CD4-positive, alpha-beta memory T cell (primary cell): ENCODE measurements at regions of chr3 and their contacts with region 1.

Region 1: GRCh38 chr3:98593046-98593936 is at the start of gene CPOX:
- DNase-seq: peak; percentile 74 to 87 (median 79)
- H3K4me3 ChIP-seq: peak within 1 kb of the TSS; percentile 43 to 92
- H3K4me3 Mint-ChIP-seq: peak within 1 kb of the TSS; percentile 93 to 100 (median 98)
- H3K27ac ChIP-seq: peak within 1 kb of the TSS; percentile 71
- H3K27ac Mint-ChIP-seq: peak within 1 kb of the TSS; percentile 74 to 99 (median 98)
- H3K4me1 ChIP-seq: peaks cover 32% of the 10 kb centered on the region
- H3K4me1 Mint-ChIP-seq: peaks cover 28 to 46% (median 37%) of the 10 kb centered on the region in 4 donors
- H3K27me3 ChIP-seq: no peaks in the 10 kb centered on the region
- H3K27me3 Mint-ChIP-seq: no peaks in the 10 kb centered on the region
- total RNA-seq, gene CPOX: 41.1 to 41.3 TPM

Region 2: GRCh38 chr3:97971677-97972567 is 621.4 kb before region 1 on chr3 and contains the start of gene RIOX2:
- CTCF ChIA-PET with region 1: no interaction called
- POLR2A ChIA-PET with region 1: no interaction called
- intact Hi-C with region 1: loop called (anchors 5 kb)
- DNase-seq: peak; percentile 74 to 84 (median 80)
- H3K4me3 ChIP-seq: peak within 1 kb of the TSS in 1 of 2 donors; percentile 54
- H3K4me3 Mint-ChIP-seq: peak within 1 kb of the TSS; percentile 88 to 96 (median 94)
- H3K27ac ChIP-seq: peak within 1 kb of the TSS; percentile 41
- H3K27ac Mint-ChIP-seq: peak within 1 kb of the TSS; percentile 91 to 96 (median 95)
- H3K4me1 ChIP-seq: peaks cover 46% of the 10 kb centered on the region
- H3K4me1 Mint-ChIP-seq: peaks cover 39 to 70% (median 55%) of the 10 kb centered on the region in 4 donors
- H3K27me3 ChIP-seq: no peaks in the 10 kb centered on the region
- H3K27me3 Mint-ChIP-seq: no peaks in the 10 kb centered on the region
- total RNA-seq, gene RIOX2: 32.2 to 35.5 TPM

Region 3: DNA sequence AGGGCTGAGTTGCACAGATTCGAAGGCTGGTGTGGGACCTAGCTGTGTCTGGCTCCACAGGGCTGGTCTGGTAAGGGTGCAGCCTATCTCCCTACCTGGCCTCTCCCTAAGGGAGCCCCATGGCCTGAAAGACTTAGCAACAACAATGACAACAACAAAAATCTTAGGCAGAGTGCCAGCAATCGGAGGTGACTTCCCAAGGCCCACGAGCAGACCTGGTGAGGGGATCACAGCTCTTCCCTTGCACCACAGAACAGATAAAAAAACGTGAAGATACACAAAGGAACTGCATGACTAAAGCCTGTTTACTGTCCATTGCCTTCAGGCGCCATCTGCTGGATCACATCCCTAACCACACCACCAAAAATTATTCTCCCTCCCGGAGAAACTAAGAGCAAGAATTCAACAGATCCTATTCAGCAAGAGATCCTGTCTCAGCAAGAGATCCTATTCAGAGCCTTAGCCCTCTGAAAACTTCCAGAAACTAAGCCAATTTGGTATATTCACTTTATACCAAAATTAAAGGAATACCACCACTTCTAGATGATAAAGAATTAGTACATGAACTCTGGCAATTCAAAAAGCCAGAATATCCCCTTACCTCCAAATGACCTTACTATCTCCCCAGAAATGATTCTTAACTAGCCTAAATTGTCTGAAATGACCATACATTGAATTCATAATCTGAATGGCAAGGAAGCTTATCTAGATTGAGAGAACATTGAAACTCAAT is 263.7 kb before region 1 on chr3:
- CTCF ChIA-PET with region 1: interaction called, 13 read pairs
- POLR2A ChIA-PET with region 1: no interaction called
- intact Hi-C with region 1: loop called (anchors 2 kb)
- DNase-seq: peak; percentile 38 to 56 (median 51)
- H3K4me3 ChIP-seq: no peak overlapping the region
- H3K4me3 Mint-ChIP-seq: peak overlapping the region in 1 of 8 donors; percentile 0
- H3K27ac ChIP-seq: no peak overlapping the region
- H3K27ac Mint-ChIP-seq: peak overlapping the region in 1 of 7 donors; percentile 6
- H3K4me1 ChIP-seq: no peaks in the 10 kb centered on the region
- H3K4me1 Mint-ChIP-seq: peaks cover 0 to 4% (median 2%) of the 10 kb centered on the region in 4 donors
- H3K27me3 ChIP-seq: no peaks in the 10 kb centered on the region
- H3K27me3 Mint-ChIP-seq: peaks cover 12 to 13% of the 10 kb centered on the region in 2 donors

Region 4: DNA sequence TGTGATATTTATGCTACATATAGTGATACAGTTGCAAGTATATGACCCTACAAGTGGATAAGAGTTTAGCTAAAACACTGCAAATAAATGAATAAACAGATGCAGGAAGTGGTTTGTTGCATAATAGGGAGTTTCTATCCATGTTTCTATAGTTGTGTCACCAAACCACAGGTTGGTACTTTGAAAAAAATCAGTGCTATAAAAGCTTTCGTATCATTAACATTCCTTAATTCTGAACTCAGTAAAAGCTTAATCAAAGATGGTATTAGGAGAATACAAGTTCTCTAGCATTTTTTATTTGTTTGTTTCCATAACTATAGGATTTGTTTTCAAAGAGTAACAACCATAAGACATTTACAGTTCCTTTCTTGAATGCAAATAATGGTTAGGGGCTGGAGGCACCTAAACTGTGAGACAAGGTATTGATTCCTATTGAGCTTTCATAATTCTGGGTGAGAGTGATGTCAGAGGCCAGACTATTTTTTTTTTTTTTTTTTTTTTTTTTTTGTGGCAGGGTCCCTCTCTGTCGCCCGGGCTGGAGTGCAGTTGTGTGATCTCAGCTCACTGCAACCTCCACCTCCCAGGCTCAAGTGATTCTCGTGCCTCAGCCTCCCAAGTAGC is 29.5 kb before region 1 on chr3:
- CTCF ChIA-PET with region 1: interaction called, 6 read pairs
- POLR2A ChIA-PET with region 1: interaction called, 24 read pairs
- intact Hi-C with region 1: loop called (anchors 1 kb)
- DNase-seq: peak; percentile 66 to 86 (median 80)
- H3K4me3 ChIP-seq: no peak overlapping the region
- H3K4me3 Mint-ChIP-seq: peak overlapping the region; percentile 45 to 87 (median 82)
- H3K27ac ChIP-seq: peak overlapping the region; percentile 92
- H3K27ac Mint-ChIP-seq: peak overlapping the region; percentile 91 to 99 (median 98)
- H3K4me1 ChIP-seq: peaks cover 86% of the 10 kb centered on the region
- H3K4me1 Mint-ChIP-seq: peaks cover 55 to 87% (median 75%) of the 10 kb centered on the region in 4 donors
- H3K27me3 ChIP-seq: no peaks in the 10 kb centered on the region
- H3K27me3 Mint-ChIP-seq: no peaks in the 10 kb centered on the region

Region 5: DNA sequence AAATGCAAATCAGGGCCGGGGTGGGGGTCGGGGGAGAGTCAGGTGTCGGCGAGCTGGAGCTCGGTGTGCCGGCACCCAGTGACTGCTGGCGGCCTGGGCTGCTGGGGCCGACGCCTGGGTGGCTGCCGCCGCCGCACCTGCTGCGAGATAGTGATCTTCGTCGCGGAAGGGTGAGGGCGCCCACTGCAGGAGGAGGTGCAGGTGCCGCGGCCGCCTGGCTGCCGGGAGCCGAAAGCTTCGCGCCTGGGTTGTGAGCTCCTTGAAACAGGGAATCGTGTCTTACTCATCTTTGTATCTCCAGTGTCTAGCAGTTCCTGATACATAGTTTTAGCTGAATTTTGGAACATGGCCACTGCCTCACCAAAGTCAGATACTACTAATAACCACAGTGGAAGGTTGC is 64.2 kb after region 1 on chr3:
- CTCF ChIA-PET with region 1: no interaction called
- POLR2A ChIA-PET with region 1: no interaction called
- intact Hi-C with region 1: no loop called
- DNase-seq: peak in 4 of 5 donors; percentile 16 to 32 (median 20)
- H3K4me3 ChIP-seq: no peak overlapping the region
- H3K4me3 Mint-ChIP-seq: peak overlapping the region in 1 of 8 donors; percentile 14
- H3K27ac ChIP-seq: no peak overlapping the region
- H3K27ac Mint-ChIP-seq: no peak overlapping the region
- H3K4me1 ChIP-seq: no peaks in the 10 kb centered on the region
- H3K4me1 Mint-ChIP-seq: peaks cover 0 to 7% (median 4%) of the 10 kb centered on the region in 4 donors
- H3K27me3 ChIP-seq: no peaks in the 10 kb centered on the region
- H3K27me3 Mint-ChIP-seq: peaks cover 14 to 16% of the 10 kb centered on the region in 2 donors

Region 6: DNA sequence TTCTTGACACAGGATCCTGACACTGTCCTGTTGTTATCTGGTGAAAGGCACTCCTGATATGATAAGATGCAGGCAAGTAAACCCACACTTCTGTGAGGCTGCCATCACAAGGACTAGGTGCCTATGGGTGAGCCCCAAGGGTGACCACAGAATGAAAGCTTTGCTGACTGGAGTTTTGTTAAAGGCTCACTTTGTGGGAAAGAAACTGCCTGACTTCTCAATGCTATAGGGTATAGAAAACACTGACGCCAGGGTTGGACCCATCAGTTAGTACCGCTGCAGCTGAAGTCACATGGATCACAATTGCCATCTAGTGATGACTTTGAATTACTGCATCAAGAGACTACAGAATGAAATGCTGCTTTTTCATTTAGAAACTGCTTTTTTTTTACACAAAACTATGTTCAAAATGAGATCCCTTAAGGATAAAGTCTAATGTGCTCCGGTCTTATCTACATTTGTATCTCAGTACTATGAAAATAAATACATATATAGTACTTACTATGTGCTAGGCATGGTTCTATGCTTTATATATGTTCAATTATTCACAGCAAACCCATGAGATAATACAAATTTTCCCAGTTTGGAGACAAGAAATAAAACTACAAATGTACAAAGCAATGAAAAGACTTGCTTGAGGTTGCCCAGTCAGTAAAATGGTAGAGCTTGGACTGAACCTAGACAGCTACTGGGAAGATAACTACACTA is 1160.1 kb after region 1 on chr3:
- CTCF ChIA-PET with region 1: no interaction called
- POLR2A ChIA-PET with region 1: no interaction called
- intact Hi-C with region 1: loop called (anchors 5 kb)
- DNase-seq: peak in 4 of 5 donors; percentile 1 to 18 (median 6)
- H3K4me3 ChIP-seq: no peak overlapping the region
- H3K4me3 Mint-ChIP-seq: no peak overlapping the region
- H3K27ac ChIP-seq: no peak overlapping the region
- H3K27ac Mint-ChIP-seq: no peak overlapping the region
- H3K4me1 ChIP-seq: no peaks in the 10 kb centered on the region
- H3K4me1 Mint-ChIP-seq: no peaks in the 10 kb centered on the region
- H3K27me3 ChIP-seq: no peaks in the 10 kb centered on the region
- H3K27me3 Mint-ChIP-seq: peaks cover 4 to 9% of the 10 kb centered on the region in 2 donors